ENCODE measurements at regions of chr6 and their contacts with region 1.

Region 1: DNA sequence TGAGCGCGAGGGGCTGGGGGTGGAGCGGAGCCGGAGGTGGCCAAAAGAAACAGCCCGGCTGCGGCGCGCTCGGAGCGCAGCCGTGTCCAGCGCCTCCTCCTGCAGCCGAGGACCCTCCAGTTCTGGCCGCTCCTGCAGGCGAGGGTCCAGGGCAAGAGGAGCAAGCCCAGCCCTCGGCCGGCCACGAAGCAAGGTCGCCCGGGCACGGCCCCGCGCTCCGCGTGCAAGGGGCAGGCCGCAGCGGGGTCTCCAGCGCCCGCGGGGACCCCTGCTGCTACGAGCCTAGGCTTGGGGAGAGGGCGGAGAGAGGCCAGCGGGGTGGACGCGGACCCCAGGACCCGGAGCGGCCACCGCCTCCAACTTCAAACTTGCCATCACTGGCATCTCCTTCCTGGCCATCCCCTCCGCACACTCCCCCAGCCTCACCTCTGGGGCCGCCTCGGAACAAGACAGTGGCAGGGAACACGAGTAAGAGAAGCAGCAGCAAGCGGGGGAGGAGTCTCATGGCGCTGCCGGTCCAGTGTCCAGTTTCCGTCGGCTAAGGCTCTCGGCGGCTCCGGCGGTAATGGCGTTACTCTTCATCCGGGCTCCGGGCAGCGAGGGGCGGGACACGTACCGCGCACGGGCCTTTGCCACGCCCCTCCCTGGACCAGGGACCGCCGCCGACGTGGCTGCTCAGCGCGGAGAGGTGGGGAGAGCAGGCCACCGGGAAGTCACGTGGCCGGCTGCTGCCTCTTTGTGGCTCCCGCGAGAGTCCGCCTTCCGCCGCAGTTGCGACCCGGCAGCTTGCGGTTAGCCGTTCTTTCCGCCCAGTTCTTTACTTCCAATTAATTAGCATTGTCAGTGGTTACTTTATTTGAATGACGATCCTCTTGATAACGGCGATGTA is at the start of gene SSR1:
- DNase-seq: peak; percentile 99
- ATAC-seq: peak; percentile 100
- H3K4me3 ChIP-seq: peak within 1 kb of the TSS; percentile 54 to 69
- H3K27ac ChIP-seq: peak within 1 kb of the TSS; percentile 39 to 59
- H3K4me1 ChIP-seq: peaks cover 0 to 1% of the 10 kb centered on the region in 2 donors
- H3K27me3 ChIP-seq: no peaks in the 10 kb centered on the region
- total RNA-seq, gene SSR1: 114 to 125 TPM

Region 2: GRCh38 chr6:7389451-7390225 is 76.8 kb after region 1 on chr6 and contains the starts of genes CAGE1 and RIOK1:
- intact Hi-C with region 1: loop called (anchors 1 to 5 kb)
- DNase-seq: peak; percentile 97 to 99
- ATAC-seq: peak; percentile 100
- H3K4me3 ChIP-seq: peak within 1 kb of the TSS; percentile 51 to 85
- H3K27ac ChIP-seq: peak within 1 kb of the TSS in 1 of 2 donors; percentile 89
- H3K4me1 ChIP-seq: peaks cover 0 to 12% of the 10 kb centered on the region in 2 donors
- H3K27me3 ChIP-seq: no peaks in the 10 kb centered on the region
- total RNA-seq, gene CAGE1: not detected
- total RNA-seq, gene RIOK1: 20.3 to 20.9 TPM